ENCODE measurements at regions of chr3 and their contacts with region 1.

Region 1: DNA sequence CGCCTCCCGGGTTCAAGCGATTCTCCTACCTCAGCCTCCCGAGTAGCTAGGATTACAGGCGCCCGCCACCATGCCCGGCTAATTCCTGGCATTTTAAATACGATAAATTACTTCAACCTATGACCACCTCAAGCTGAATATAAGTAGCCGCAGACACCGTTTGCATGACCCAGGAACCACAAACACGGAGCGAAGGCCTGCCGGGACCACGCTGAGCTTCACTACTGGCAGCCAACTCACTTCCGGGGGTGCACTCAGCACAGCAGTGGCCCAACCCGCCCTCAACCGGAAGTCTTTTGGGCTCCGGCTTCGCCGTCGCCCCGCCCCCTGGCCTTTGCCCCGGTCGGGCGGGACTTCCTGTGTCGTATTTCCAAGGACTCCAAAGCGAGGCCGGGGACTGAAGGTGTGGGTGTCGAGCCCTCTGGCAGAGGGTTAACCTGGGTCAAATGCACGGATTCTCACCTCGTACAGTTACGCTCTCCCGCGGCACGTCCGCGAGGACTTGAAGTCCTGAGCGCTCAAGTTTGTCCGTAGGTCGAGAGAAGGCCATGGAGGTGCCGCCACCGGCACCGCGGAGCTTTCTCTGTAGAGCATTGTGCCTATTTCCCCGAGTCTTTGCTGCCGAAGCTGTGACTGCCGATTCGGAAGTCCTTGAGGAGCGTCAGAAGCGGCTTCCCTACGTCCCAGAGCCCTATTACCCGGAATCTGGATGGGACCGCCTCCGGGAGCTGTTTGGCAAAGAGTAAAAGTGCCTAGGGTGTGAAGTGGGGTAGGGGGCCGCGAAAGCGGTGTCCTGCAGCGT is at the start of gene TIMMDC1:
- DNase-seq: peak; percentile 93
- H3K4me3 ChIP-seq: peak within 1 kb of the TSS; percentile 77 to 99
- H3K27ac ChIP-seq: peak within 1 kb of the TSS; percentile 93 to 95
- H3K4me1 ChIP-seq: peaks cover 0 to 8% of the 10 kb centered on the region in 2 experiments; a peak in 1 of 4 replicates
- H3K27me3 ChIP-seq: no peaks in the 10 kb centered on the region
- CTCF ChIP-seq: no peak
- EP300 ChIP-seq: no peak
- RAD21 ChIP-seq: peak; percentile 3; the same call in 1 of the 2 replicates
- polyA plus RNA-seq, gene TIMMDC1: 128 and 153 TPM in 2 replicates

Region 2: DNA sequence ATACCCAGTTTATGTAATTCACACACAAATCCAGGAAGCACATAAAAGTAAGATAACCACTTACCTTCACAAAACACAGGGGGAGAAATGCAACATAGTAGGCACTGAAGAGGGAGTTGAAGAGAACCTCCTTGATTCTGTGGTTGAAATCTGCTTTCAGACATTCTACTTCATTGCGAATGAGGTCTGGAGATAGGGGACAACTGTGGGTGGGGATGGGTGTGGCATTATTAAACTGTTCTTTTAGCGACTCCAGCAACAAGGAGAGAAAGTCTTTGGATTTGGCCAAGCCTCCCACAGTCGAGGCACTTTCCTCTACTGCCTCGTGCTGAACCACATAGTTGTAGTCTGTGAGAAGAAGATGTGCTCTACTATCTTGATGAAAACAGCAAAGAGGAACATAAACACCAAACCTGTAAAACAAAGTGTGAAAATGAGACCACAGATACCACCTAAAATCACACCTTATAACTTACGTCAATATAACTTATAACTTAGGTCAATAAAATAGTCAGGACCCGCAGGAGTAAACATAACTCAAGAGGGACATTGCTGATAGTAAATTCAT is 60.6 kb before region 1 on chr3:
- CTCF ChIA-PET with region 1: no interaction called
- POLR2A ChIA-PET with region 1: no interaction called
- DNase-seq: no peak
- H3K4me3 ChIP-seq: no peak overlapping the region
- H3K27ac ChIP-seq: no peak overlapping the region
- H3K4me1 ChIP-seq: peaks cover 0 to 7% of the 10 kb centered on the region in 2 experiments; a peak in 2 of 4 replicates
- H3K27me3 ChIP-seq: no peaks in the 10 kb centered on the region
- CTCF ChIP-seq: no peak
- EP300 ChIP-seq: no peak
- RAD21 ChIP-seq: no peak

Region 3: DNA sequence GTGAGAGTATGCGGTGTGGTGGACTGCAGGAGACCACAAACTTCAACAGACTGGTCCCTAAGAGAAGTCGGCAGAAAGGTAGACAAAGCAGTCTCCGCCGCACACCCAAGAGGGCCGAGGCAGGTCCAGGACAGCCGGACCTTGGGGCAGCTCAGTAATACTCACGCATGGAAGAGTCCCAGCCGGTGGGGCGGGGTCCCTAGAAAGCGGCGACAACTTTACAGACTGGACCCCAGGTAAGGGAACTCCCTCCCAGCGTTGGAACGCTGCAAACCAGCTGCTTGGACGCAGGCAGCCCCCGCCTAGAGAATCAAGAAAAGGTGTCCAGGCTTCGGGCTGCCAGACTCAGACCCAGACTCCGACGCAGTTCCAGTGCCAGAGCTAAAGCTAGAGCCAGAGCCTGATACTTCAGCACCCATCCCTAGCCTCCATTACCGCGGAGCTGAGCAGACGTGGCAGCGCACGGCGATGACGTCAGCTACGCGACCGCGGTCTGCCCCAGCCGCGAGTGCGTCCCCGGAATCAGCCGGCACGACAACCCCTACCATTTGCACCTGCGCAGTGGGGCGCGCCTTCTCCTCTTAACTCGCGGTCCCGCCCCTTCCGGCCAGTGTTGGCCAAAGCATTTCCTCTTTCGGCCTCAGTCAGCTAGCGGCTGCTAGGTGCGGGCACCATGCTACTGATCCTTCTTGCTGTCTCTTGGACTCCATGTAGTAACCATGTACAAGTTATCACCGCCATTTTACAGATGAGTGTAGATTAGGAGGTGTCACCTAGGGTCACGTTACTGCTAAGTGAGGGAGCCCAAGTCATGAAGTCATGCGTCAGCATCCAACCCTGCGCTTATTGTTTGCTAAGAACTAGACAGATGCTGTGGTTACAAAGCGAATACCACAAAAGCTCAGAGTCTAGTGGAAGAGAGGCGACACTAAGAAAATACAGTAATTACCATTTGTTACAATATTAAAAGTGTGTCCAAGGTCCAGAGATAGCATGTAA is 34.9 kb before region 1 on chr3 and contains the start of gene TMEM39A:
- CTCF ChIA-PET with region 1: no interaction called
- POLR2A ChIA-PET with region 1: interaction called, 11 read pairs
- DNase-seq: peak; percentile 98
- H3K4me3 ChIP-seq: peak within 1 kb of the TSS; percentile 99 to 100
- H3K27ac ChIP-seq: peak within 1 kb of the TSS; percentile 90 to 96
- H3K4me1 ChIP-seq: peaks cover 11 to 15% of the 10 kb centered on the region in 2 experiments
- H3K27me3 ChIP-seq: no peaks in the 10 kb centered on the region
- CTCF ChIP-seq: no peak
- EP300 ChIP-seq: no peak
- RAD21 ChIP-seq: no peak; the same call in 1 of the 2 replicates
- polyA plus RNA-seq, gene TMEM39A: 13.2 and 19.0 TPM in 2 replicates

Region 4: GRCh38 chr3:119469381-119470189 is 28.8 kb before region 1 on chr3:
- CTCF ChIA-PET with region 1: interaction called, 3 read pairs
- POLR2A ChIA-PET with region 1: interaction called, 10 read pairs
- DNase-seq: no peak
- H3K4me3 ChIP-seq: peak overlapping the region; percentile 79 to 82
- H3K27ac ChIP-seq: peak overlapping the region; percentile 57 to 66; a peak in 3 of 4 replicates
- H3K4me1 ChIP-seq: peaks cover 0 to 18% of the 10 kb centered on the region in 2 experiments; a peak in 2 of 4 replicates
- H3K27me3 ChIP-seq: no peaks in the 10 kb centered on the region
- CTCF ChIP-seq: 0 out of 2 replicates have a peak, but pooled peaks have one; percentile 5
- EP300 ChIP-seq: no peak
- RAD21 ChIP-seq: no peak

Region 5: GRCh38 chr3:119662604-119663373 is 164.4 kb after region 1 on chr3:
- CTCF ChIA-PET with region 1: interaction called, 4 read pairs
- POLR2A ChIA-PET with region 1: interaction called, 21 read pairs
- DNase-seq: no peak
- H3K4me3 ChIP-seq: 0 out of 4 replicates have a peak overlapping the region, but pooled peaks of 1 of the 2 experiments have one; percentile 2
- H3K27ac ChIP-seq: peak overlapping the region; percentile 93 to 98
- H3K4me1 ChIP-seq: peaks cover 40 to 58% of the 10 kb centered on the region in 2 experiments
- H3K27me3 ChIP-seq: no peaks in the 10 kb centered on the region
- CTCF ChIP-seq: peak; percentile 42
- EP300 ChIP-seq: peak in 1 of 2 experiments; percentile 47; a peak in 1 of 4 replicates
- RAD21 ChIP-seq: no peak